PC-3 (cell line): ENCODE measurements at regions of chr1 and their contacts with region 1.

Region 1: DNA sequence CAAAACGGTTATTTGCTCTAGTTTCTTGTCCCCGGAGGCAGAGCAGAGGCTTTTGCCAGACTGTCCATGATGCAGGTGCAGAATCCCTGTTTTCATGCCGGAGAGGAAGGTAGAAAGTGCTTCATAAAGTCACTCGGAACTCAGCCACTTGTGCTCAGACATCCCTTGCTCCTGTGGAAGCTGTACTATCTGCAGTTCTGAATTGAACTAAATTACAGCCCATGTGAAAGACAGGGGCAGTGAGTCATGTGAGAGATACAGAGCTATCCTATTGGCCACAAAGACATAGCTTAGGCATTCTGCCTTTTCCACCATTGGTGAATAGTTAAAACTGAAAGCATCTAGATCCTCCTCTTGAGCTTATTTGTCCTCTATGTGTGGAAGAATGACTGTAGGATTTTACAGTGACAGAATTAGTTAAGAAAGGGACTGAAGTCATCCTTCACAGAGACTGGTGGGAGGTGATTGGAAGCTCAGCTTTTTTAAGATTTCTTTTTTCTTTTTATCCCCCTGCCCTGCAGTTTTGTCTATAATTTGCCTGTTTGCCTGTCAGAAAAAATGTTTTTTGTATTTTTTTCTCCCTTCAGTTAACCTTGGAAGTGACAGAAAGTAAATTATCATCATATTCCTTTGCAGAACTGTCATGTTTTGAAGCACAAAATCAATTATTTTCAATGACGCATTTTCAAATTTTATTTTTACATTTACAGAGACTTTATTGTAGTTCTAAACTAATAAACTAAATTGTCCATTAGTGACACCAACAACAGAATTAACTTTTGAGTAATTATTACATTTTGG is 298.6 kb downstream of the PTPRC start:
- DNase-seq: peak; percentile 86
- ATAC-seq: peak; percentile 83
- H3K4me3 ChIP-seq: peak overlapping the region; percentile 83
- H3K27ac ChIP-seq: peak overlapping the region; percentile 89
- H3K4me1 ChIP-seq: peaks cover 26% of the 10 kb centered on the region
- H3K27me3 ChIP-seq: no peaks in the 10 kb centered on the region
- CTCF ChIP-seq: no peak

Region 2: GRCh38 chr1:198850196-198850595 is 87.2 kb before region 1 on chr1:
- CTCF ChIA-PET with region 1: no interaction called
- POLR2A ChIA-PET with region 1: interaction called, 5 read pairs
- intact Hi-C with region 1: loop called (anchors 1 kb)
- DNase-seq: peak; percentile 86
- ATAC-seq: peak; percentile 93
- H3K4me3 ChIP-seq: peak overlapping the region; percentile 5; the same call in 1 of the 2 replicates
- H3K27ac ChIP-seq: peak overlapping the region; percentile 84
- H3K4me1 ChIP-seq: peaks cover 29% of the 10 kb centered on the region
- H3K27me3 ChIP-seq: no peaks in the 10 kb centered on the region
- CTCF ChIP-seq: no peak

Region 3: DNA sequence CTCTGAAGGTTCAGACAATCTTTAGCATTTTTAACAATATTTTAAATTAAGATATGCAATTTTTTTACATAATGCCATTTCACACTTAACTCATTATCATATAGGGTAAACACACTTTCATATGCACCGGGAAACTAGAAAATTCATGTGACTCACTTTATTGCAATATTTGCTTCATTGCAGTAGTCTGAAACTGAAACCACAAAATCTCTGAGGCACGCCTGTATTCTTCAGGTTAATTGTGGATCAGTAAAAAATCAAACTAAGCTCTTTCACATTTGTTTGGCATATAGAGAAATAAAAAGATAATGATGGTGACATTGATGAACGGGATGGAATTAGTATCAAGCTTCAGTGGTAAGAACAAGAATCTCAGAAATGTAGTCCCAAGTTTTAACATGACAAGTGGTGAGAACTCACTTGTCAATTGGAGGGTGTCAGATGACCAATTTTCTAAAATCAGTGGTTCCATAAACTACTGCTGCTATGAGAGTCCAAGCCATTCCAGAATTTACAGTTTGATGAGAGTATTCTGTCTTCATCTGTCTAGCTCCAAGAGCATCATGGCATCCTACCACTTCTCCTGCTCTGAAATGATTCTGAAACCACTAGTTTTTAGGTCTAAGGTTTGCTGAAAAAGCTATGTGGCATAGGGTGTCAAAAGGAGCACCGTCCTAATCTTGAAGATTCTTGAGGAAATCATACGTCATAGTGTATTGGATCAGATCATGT is 17.6 kb before region 1 on chr1:
- CTCF ChIA-PET with region 1: no interaction called
- POLR2A ChIA-PET with region 1: interaction called, 3 read pairs
- intact Hi-C with region 1: loop called (anchors 2 kb)
- DNase-seq: peak; percentile 33
- ATAC-seq: peak; percentile 39; the same call in 1 of the 2 replicates
- H3K4me3 ChIP-seq: no peak overlapping the region; the same call in 1 of the 2 replicates
- H3K27ac ChIP-seq: peak overlapping the region; percentile 28
- H3K4me1 ChIP-seq: peaks cover 29% of the 10 kb centered on the region
- H3K27me3 ChIP-seq: no peaks in the 10 kb centered on the region
- CTCF ChIP-seq: no peak

Region 4: GRCh38 chr1:199029855-199030254 is 92.4 kb after region 1 on chr1:
- CTCF ChIA-PET with region 1: no interaction called
- POLR2A ChIA-PET with region 1: no interaction called
- intact Hi-C with region 1: loop called (anchors 1 kb)
- DNase-seq: peak; percentile 44
- ATAC-seq: peak; percentile 33; the same call in 1 of the 2 replicates
- H3K4me3 ChIP-seq: no peak overlapping the region
- H3K27ac ChIP-seq: no peak overlapping the region
- H3K4me1 ChIP-seq: no peaks in the 10 kb centered on the region; the same call in 1 of the 2 replicates
- H3K27me3 ChIP-seq: no peaks in the 10 kb centered on the region
- CTCF ChIP-seq: no peak

Region 5: GRCh38 chr1:199272643-199273086 is 335.2 kb after region 1 on chr1:
- CTCF ChIA-PET with region 1: no interaction called
- POLR2A ChIA-PET with region 1: no interaction called
- intact Hi-C with region 1: loop called (anchors 5 kb)
- DNase-seq: peak; percentile 89
- ATAC-seq: peak; percentile 91
- H3K4me3 ChIP-seq: no peak overlapping the region
- H3K27ac ChIP-seq: peak overlapping the region; percentile 74
- H3K4me1 ChIP-seq: peaks cover 34% of the 10 kb centered on the region
- H3K27me3 ChIP-seq: no peaks in the 10 kb centered on the region
- CTCF ChIP-seq: no peak